ENCODE measurements at regions of chr7 and their contacts with region 1.

Region 1: DNA sequence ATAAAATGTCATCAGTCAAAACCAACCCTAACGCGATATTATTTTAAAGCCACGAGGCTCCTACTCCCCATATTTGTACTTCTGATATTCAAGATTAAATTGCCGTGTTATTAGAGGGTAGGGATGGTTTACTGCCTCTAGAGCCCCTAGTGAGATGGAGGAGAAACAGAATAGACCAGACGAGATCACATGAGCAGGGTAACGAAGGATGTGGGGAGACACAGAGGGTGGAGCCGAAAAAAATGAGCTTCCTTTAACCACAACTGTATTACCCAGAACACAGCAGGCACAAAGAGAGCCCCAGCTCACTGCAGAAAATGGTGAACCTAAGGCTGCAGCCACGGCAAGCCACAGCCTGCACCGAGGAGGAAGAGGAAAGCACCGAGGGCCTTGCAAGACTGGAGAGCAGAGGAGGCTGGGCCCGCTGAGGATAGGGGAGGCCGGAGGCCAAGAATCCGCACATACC is 14.3 kb downstream of the ZC3HAV1 start:
- DNase-seq: peak; percentile 92
- ATAC-seq: peak; percentile 84
- H3K4me3 Mint-ChIP-seq: peak overlapping the region; percentile 78
- H3K27ac Mint-ChIP-seq: peak overlapping the region; percentile 92
- H3K4me1 Mint-ChIP-seq: peaks cover 87% of the 10 kb centered on the region
- H3K27me3 Mint-ChIP-seq: no peaks in the 10 kb centered on the region

Region 2: GRCh38 chr7:139080905-139081304 is 14.3 kb before region 1 on chr7:
- CTCF ChIA-PET with region 1: interaction called, 43 read pairs
- POLR2A ChIA-PET with region 1: interaction called, 11 read pairs
- DNase-seq: no peak
- ATAC-seq: peak; percentile 15
- H3K4me3 Mint-ChIP-seq: peak overlapping the region; percentile 19
- H3K27ac Mint-ChIP-seq: peak overlapping the region; percentile 71
- H3K4me1 Mint-ChIP-seq: peaks cover 91% of the 10 kb centered on the region
- H3K27me3 Mint-ChIP-seq: no peaks in the 10 kb centered on the region

Region 3: GRCh38 chr7:139109188-139109982 is 14.2 kb after region 1 on chr7 and contains the start of gene ZC3HAV1:
- CTCF ChIA-PET with region 1: interaction called, 18 read pairs
- POLR2A ChIA-PET with region 1: interaction called, 125 read pairs
- DNase-seq: peak; percentile 95
- ATAC-seq: peak; percentile 76
- H3K4me3 Mint-ChIP-seq: peak within 1 kb of the TSS; percentile 91
- H3K27ac Mint-ChIP-seq: peak within 1 kb of the TSS; percentile 95
- H3K4me1 Mint-ChIP-seq: peaks cover 29% of the 10 kb centered on the region
- H3K27me3 Mint-ChIP-seq: no peaks in the 10 kb centered on the region
- total RNA-seq, gene ZC3HAV1: 121 to 122 TPM

Region 4: DNA sequence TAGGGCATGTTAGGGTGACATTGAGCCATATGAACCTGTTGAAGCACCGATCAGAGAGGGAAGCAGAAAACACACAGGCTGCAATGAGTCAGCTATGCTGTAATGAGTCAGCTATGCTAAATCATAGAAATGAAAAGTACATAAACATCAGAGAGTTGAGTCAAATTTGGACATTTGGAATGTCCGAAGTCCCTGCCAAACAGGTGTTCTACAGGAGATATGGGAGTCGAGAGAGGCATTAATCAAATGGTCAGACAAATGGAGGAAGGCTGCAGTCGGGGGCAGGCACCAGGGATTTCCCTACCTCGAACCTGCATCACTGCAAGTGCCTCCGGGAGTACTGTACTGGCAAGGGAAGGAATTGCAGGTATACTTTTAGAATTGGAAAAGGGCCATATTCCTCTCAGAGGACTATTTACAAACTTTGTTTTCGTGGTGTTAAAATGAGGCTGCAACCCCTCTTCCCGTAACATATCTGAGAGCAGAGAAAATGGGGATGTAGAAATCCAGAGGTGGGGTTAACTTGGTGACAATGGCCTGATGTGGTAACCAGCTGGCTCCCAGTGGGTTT is 23.1 kb after region 1 on chr7:
- CTCF ChIA-PET with region 1: interaction called, 5 read pairs
- POLR2A ChIA-PET with region 1: interaction called, 10 read pairs
- DNase-seq: no peak
- ATAC-seq: peak; percentile 29
- H3K4me3 Mint-ChIP-seq: no peak overlapping the region
- H3K27ac Mint-ChIP-seq: peak overlapping the region; percentile 91
- H3K4me1 Mint-ChIP-seq: peaks cover 19% of the 10 kb centered on the region
- H3K27me3 Mint-ChIP-seq: no peaks in the 10 kb centered on the region

Region 5: DNA sequence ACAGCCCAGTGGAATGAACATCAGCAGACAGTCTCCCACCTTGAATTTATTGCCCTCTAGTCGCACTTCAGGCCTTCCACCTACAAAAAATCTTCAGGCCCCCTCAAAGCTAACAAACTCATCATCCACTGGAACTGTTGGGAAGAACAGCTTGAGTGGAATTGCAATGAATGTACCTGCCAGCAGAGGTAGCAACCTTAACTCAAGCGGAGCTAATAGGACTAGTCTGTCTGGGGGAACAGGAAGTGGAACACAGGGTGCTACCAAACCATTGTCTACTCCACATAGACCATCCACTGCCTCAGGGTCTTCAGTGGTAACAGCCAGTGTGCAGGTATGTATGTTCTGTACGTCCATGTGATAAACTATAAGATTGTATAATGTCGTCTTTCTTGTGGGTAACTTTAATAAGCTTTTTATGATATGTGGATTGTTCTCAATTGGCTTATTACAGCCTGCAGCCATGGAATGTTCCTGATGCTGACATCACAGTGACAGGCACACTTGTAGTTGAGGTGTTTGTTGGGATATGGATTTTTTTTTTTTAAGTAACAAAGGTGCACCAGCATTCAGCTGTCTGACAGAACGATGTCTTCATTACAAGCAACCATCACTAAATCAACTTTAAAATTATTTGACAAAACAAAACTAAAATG is 189.1 kb after region 1 on chr7:
- CTCF ChIA-PET with region 1: no interaction called
- POLR2A ChIA-PET with region 1: no interaction called
- DNase-seq: no peak
- ATAC-seq: no peak
- H3K4me3 Mint-ChIP-seq: no peak overlapping the region
- H3K27ac Mint-ChIP-seq: no peak overlapping the region
- H3K4me1 Mint-ChIP-seq: no peaks in the 10 kb centered on the region
- H3K27me3 Mint-ChIP-seq: no peaks in the 10 kb centered on the region

Region 6: DNA sequence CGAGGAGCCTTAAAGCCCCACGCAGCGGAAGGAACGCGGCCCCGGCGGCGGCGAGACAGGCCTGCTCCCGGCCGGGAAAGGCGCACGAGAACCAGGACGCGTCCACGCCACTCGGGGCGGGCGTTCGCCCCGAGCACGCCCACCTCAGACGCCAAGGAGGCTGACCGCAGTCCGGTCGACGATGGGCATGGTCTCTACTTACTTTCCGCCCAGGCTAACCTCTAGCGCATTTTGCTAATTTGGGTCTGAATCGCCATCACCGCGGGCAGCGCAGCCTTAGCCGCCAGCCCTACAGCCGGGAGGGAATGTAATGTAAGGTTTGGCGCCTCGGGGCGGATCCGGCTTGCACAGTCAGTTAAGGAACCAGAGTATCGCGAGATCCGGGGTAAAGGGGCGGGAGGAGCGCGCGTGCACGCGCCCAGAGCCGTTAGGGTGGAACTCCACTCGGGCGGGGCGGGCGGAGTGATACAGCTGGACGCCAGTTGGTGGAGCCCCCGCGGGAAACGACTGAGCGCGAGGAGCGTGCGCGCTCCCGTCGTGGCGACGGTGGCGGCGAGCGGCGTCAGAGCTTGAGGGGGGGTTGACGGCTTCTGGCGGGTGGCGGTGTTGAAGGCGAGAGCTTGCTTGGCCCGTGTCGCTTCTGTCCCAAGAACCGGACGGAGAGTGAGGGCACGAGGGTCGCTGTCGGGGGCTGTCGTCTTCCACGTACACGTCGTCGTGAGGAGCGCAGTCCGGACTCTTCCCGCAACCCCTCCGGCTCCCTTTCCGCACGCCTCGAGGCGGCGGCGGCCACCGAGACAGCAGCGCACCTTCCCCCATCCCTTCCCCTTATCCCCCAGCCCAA is 264.4 kb after region 1 on chr7 and contains the start of gene LUC7L2:
- CTCF ChIA-PET with region 1: no interaction called
- POLR2A ChIA-PET with region 1: interaction called, 18 read pairs
- DNase-seq: peak; percentile 100
- ATAC-seq: peak; percentile 78
- H3K4me3 Mint-ChIP-seq: peak within 1 kb of the TSS; percentile 95
- H3K27ac Mint-ChIP-seq: peak within 1 kb of the TSS; percentile 99
- H3K4me1 Mint-ChIP-seq: peaks cover 44% of the 10 kb centered on the region
- H3K27me3 Mint-ChIP-seq: no peaks in the 10 kb centered on the region
- total RNA-seq, gene LUC7L2: 126 to 131 TPM

Measured in activated CD8-positive, alpha-beta T cell treated with anti-CD3 and anti-CD28 coated beads, Interleukin-2, amount 10 ng/mL, durations not matched to agents 7 days and 5 days (primary cell).